Naive thymus-derived CD4-positive, alpha-beta T cell (primary cell): ENCODE measurements at regions of chr12 and their contacts with region 1.

Region 1: GRCh38 chr12:98593351-98594049 is at the start of gene SLC25A3:
- DNase-seq: peak; percentile 79 to 96 (median 92)
- ATAC-seq: peak; percentile 98
- H3K4me3 ChIP-seq: peak within 1 kb of the TSS; percentile 80
- H3K4me3 Mint-ChIP-seq: peak within 1 kb of the TSS; percentile 88 to 99 (median 96)
- H3K27ac ChIP-seq: peak within 1 kb of the TSS; percentile 95
- H3K27ac Mint-ChIP-seq: peak within 1 kb of the TSS; percentile 98 to 100 (median 99)
- H3K4me1 ChIP-seq: peaks cover 17 to 22% of the 10 kb centered on the region in 2 donors
- H3K4me1 Mint-ChIP-seq: peaks cover 20 to 48% (median 36%) of the 10 kb centered on the region in 7 donors
- H3K27me3 ChIP-seq: no peaks in the 10 kb centered on the region
- H3K27me3 Mint-ChIP-seq: peaks cover 0 to 2% (median 0%) of the 10 kb centered on the region in 5 donors
- total RNA-seq, gene SLC25A3: 234 to 448 (median 353) TPM

Region 2: DNA sequence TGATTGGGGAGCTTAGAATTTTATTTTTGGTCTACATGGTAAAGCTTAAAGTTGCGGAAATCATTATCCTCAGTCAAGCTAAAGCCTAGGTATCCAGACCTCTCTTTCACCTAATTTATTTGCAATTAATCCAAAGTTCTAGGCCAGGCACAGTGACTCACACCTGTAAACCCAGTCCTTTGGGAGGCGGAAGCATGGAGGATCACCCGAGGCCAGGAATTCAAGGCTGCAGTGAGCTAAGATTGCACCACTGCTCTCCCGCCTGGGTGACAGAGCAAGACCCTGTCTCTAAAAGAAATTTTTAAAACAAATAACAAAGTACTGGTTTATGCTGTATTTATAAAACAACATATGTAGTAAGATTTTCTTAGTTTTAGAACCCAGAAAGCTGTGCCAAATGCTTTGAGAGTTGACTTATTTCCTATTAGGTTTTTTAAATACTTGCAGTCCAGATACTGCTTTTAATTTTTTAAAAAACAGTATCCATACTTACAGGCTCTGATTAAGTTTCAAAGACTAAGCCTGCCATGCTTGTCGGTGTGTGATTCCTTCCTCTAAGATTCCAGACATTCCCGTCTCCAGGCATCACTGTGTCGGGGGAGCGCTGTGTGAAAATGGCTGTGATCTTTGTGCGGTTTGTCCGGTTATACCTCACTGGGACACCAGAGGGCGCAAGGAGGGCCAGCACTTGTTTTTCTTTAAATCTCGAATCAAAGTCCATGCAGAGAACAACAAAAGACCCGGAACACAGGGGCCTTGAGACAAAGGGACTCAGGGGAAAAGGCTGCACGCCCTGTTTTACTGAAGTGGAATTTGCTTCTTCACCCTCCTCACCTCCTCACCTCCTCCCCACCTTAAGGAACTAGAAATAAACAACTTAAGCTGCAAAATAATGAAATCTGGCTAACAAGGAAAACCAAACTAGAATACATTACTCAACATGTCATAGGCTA is 102.7 kb before region 1 on chr12:
- CTCF ChIA-PET with region 1: interaction called, 10 read pairs
- POLR2A ChIA-PET with region 1: interaction called, 3 read pairs
- intact Hi-C with region 1: loop called (anchors 1 kb)
- DNase-seq: peak; percentile 69 to 86 (median 78)
- ATAC-seq: peak; percentile 99
- H3K4me3 ChIP-seq: no peak overlapping the region
- H3K4me3 Mint-ChIP-seq: peak overlapping the region; percentile 21 to 67 (median 54)
- H3K27ac ChIP-seq: peak overlapping the region; percentile 58
- H3K27ac Mint-ChIP-seq: peak overlapping the region; percentile 71 to 98 (median 92)
- H3K4me1 ChIP-seq: peaks cover 0 to 7% of the 10 kb centered on the region in 2 donors
- H3K4me1 Mint-ChIP-seq: peaks cover 0 to 7% (median 6%) of the 10 kb centered on the region in 7 donors
- H3K27me3 ChIP-seq: no peaks in the 10 kb centered on the region
- H3K27me3 Mint-ChIP-seq: peaks cover 0 to 10% (median 0%) of the 10 kb centered on the region in 5 donors

Region 3: DNA sequence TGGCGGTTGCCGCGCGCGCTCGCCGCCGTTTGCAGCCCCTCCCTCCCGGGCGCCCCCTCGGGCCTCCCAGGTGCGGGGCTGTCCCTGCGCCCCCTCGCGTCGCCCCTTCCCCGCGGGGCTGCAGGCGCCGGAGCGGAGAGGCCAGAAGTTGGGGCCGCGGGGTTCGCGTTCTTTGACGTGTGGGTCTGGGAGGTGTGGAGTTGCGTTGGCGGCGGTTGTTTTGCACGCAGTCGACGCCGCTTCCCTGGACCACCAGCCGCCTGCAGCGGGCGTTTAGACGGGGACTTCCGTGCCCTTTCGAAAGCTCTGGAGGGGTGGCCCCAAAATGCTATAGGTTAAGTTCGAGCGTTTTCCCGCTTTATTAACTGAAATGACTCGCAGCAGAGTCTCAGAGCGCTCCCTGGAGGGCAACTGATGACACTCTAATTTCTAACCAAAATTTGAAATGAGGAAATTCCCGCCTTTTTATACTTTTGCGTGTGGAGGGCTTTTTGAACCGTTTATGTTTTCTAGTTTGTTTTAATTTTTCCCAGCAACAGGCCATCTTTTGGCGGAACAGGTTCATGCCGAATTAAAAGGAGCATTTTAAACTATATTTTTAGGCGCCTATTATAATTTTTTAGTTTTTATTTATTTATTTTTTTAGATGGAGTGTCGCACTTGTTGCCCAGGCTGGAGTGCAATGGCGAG is 77.2 kb before region 1 on chr12:
- CTCF ChIA-PET with region 1: no interaction called
- POLR2A ChIA-PET with region 1: interaction called, 39 read pairs
- intact Hi-C with region 1: loop called (anchors 1 kb)
- DNase-seq: peak; percentile 53 to 90 (median 83)
- ATAC-seq: peak; percentile 79
- H3K4me3 ChIP-seq: peak overlapping the region; percentile 92
- H3K4me3 Mint-ChIP-seq: peak overlapping the region; percentile 95 to 100 (median 99)
- H3K27ac ChIP-seq: peak overlapping the region; percentile 95
- H3K27ac Mint-ChIP-seq: peak overlapping the region; percentile 91 to 99 (median 99)
- H3K4me1 ChIP-seq: peaks cover 10 to 26% of the 10 kb centered on the region in 2 donors
- H3K4me1 Mint-ChIP-seq: peaks cover 33 to 69% (median 52%) of the 10 kb centered on the region in 7 donors
- H3K27me3 ChIP-seq: no peaks in the 10 kb centered on the region
- H3K27me3 Mint-ChIP-seq: peaks cover 0 to 1% (median 0%) of the 10 kb centered on the region in 5 donors

Region 4: GRCh38 chr12:98572010-98572409 is 21.5 kb before region 1 on chr12:
- CTCF ChIA-PET with region 1: interaction called, 12 read pairs
- POLR2A ChIA-PET with region 1: interaction called, 10 read pairs
- intact Hi-C with region 1: loop called in 1 of 2 experiments (anchors 1 kb)
- DNase-seq: no peak
- ATAC-seq: no peak
- H3K4me3 ChIP-seq: no peak overlapping the region
- H3K4me3 Mint-ChIP-seq: no peak overlapping the region
- H3K27ac ChIP-seq: no peak overlapping the region
- H3K27ac Mint-ChIP-seq: no peak overlapping the region
- H3K4me1 ChIP-seq: no peaks in the 10 kb centered on the region
- H3K4me1 Mint-ChIP-seq: peaks cover 0 to 1% (median under 1%) of the 10 kb centered on the region in 7 donors
- H3K27me3 ChIP-seq: no peaks in the 10 kb centered on the region
- H3K27me3 Mint-ChIP-seq: peaks cover 0 to 3% (median 0%) of the 10 kb centered on the region in 5 donors

Region 5: GRCh38 chr12:98644711-98645402 is 51.4 kb after region 1 on chr12 and contains the starts of genes APAF1 and IKBIP:
- CTCF ChIA-PET with region 1: interaction called, 5 read pairs
- POLR2A ChIA-PET with region 1: interaction called, 24 read pairs
- intact Hi-C with region 1: loop called (anchors 1 kb)
- DNase-seq: peak; percentile 92 to 98 (median 96)
- ATAC-seq: peak; percentile 96
- H3K4me3 ChIP-seq: peak within 1 kb of the TSS; percentile 72
- H3K4me3 Mint-ChIP-seq: peak within 1 kb of the TSS; percentile 94 to 100 (median 98)
- H3K27ac ChIP-seq: peak within 1 kb of the TSS; percentile 76
- H3K27ac Mint-ChIP-seq: peak within 1 kb of the TSS; percentile 84 to 97 (median 93)
- H3K4me1 ChIP-seq: peaks cover 0 to 8% of the 10 kb centered on the region in 2 donors
- H3K4me1 Mint-ChIP-seq: peaks cover 7 to 40% (median 27%) of the 10 kb centered on the region in 7 donors
- H3K27me3 ChIP-seq: no peaks in the 10 kb centered on the region
- H3K27me3 Mint-ChIP-seq: no peaks in the 10 kb centered on the region
- total RNA-seq, gene APAF1: 22.8 to 36.4 (median 28.6) TPM
- total RNA-seq, gene IKBIP: 2.3 to 24.6 (median 6.1) TPM

Region 6: DNA sequence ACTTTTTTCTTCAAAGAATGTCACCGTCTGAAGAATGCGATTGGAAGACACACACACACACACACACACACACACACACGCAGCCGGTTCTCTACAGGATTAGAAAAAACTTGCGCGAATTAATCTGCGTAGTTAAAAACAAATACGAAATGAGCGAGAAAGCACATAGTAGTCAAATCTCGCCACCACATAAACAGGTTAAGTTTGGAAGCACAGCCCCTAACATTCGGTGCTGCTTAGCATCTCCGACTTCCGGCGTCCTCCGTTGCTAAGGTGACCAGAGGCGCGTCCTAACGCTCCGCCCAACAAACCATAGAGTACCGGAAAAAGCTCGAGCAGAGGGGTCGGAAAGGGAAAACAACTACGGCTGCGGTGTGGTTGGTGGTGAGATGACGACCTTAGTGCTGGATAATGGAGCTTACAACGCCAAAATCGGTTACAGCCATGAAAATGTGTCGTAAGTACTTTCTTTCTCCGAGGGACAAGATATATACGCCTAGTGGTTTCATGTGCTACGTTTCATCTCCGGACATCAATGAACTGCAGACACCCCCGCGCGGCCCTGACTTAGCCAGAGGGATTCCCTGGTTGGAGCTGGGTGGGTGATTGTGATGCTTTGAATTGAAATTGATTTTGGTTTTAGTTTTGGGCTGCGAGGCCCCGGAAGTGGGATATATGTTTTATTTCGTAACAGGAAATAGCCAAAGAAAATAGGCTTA is 1607.1 kb after region 1 on chr12 and contains the start of gene ACTR6:
- CTCF ChIA-PET with region 1: no interaction called
- POLR2A ChIA-PET with region 1: no interaction called
- intact Hi-C with region 1: loop called (anchors 5 to 10 kb)
- DNase-seq: peak; percentile 91 to 99 (median 97)
- ATAC-seq: peak; percentile 93
- H3K4me3 ChIP-seq: peak within 1 kb of the TSS; percentile 84
- H3K4me3 Mint-ChIP-seq: peak within 1 kb of the TSS; percentile 95 to 99 (median 98)
- H3K27ac ChIP-seq: peak within 1 kb of the TSS; percentile 95
- H3K27ac Mint-ChIP-seq: peak within 1 kb of the TSS; percentile 98 to 100 (median 99)
- H3K4me1 ChIP-seq: peaks cover 10 to 27% of the 10 kb centered on the region in 2 donors
- H3K4me1 Mint-ChIP-seq: peaks cover 17 to 56% (median 44%) of the 10 kb centered on the region in 7 donors
- H3K27me3 ChIP-seq: no peaks in the 10 kb centered on the region
- H3K27me3 Mint-ChIP-seq: no peaks in the 10 kb centered on the region
- total RNA-seq, gene ACTR6: 24.1 to 46.8 (median 34.6) TPM